Naive thymus-derived CD4-positive, alpha-beta T cell (primary cell): ENCODE measurements at regions of chr17 and their contacts with region 1.

Region 1: DNA sequence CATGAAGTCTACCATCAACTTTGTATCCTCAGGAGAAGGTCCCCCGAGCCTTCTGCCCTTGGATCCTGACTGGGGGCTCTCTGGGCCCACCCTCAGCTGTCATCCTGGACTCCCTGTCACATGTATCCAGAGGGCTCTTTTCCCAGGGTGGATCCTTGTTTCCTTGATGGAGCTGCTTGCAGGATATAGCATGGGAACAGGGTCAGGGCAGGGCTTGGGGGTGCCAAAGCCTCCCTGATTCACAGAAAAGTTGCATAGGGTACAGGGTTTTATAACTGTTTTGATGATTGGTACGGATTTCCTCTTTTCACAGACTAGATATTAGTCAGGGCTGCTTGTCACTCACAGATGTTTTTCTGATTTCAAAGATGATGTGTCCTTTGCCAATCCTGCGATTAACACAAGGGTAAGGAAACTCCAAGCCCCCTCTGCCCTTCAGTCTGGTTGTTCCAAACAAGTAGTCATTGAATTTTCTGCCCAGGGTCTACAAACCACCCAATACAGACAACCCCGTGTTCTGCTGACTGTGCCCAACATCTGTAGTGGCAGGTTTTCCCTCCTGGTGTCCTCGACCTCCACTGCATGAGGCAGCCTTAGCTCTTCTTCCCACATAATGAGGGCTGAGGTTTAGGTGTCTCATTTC is 20.6 kb upstream of the SLC35G3 start:
- DNase-seq: peak in 6 of 9 donors; percentile 44 to 64 (median 54)
- ATAC-seq: peak; percentile 36
- H3K4me3 ChIP-seq: peak overlapping the region; percentile 47
- H3K4me3 Mint-ChIP-seq: peak overlapping the region; percentile 69 to 91 (median 84)
- H3K27ac ChIP-seq: peak overlapping the region; percentile 76
- H3K27ac Mint-ChIP-seq: peak overlapping the region; percentile 90 to 99 (median 98)
- H3K4me1 ChIP-seq: peaks cover 75 to 85% of the 10 kb centered on the region in 2 donors
- H3K4me1 Mint-ChIP-seq: peaks cover 69 to 92% (median 87%) of the 10 kb centered on the region in 7 donors
- H3K27me3 ChIP-seq: no peaks in the 10 kb centered on the region
- H3K27me3 Mint-ChIP-seq: no peaks in the 10 kb centered on the region

Region 2: GRCh38 chr17:34665150-34665806 is 549.5 kb before region 1 on chr17:
- CTCF ChIA-PET with region 1: no interaction called
- POLR2A ChIA-PET with region 1: no interaction called
- intact Hi-C with region 1: no loop called
- DNase-seq: peak in 4 of 9 donors; percentile 4 to 19 (median 12)
- ATAC-seq: peak; percentile 32
- H3K4me3 ChIP-seq: no peak overlapping the region
- H3K4me3 Mint-ChIP-seq: peak overlapping the region in 8 of 10 donors; percentile 6 to 68 (median 44)
- H3K27ac ChIP-seq: no peak overlapping the region
- H3K27ac Mint-ChIP-seq: peak overlapping the region in 5 of 9 donors; percentile 10 to 61 (median 47)
- H3K4me1 ChIP-seq: peaks cover 0 to 13% of the 10 kb centered on the region in 2 donors
- H3K4me1 Mint-ChIP-seq: peaks cover 3 to 19% (median 13%) of the 10 kb centered on the region in 7 donors
- H3K27me3 ChIP-seq: no peaks in the 10 kb centered on the region
- H3K27me3 Mint-ChIP-seq: peaks cover 0 to 20% (median 7%) of the 10 kb centered on the region in 5 donors

Region 3: DNA sequence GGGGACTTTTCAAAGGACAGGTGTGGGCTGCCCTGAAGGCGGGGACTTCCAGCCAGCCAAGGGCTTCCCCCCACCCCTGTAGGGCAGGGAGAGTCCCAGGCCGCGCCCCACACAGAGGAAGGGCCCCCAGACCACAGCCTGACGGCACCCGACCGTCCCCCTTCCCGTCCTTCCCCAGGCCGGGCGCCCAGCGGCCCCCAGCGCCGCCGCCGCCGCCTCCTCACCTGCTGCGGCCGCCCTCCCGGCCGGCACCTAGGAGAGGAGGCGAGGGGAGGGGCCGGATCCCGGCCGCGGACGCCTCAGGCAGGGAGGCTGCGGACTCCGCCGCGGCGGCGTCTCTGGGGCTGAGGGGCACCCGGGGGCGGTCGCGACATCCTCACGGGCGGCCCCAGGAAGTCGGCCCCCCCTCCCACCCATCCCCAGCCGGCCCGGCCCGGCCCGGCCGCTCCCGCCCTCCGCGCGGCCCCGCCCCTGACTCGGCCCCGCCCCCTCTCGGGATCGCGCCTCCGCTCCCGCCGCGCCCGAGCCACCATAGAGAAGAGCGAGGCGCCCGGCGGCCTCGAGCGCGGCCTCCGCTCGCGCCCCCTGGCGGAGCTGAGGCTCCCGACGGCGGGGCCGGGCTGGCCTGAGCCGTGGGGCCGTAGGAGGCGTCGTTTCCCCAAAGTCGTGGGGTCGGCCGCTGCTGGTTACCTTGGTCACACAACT is 125.7 kb before region 1 on chr17:
- CTCF ChIA-PET with region 1: no interaction called
- POLR2A ChIA-PET with region 1: no interaction called
- intact Hi-C with region 1: no loop called
- DNase-seq: peak; percentile 77 to 95 (median 89)
- ATAC-seq: peak; percentile 94
- H3K4me3 ChIP-seq: peak overlapping the region; percentile 93
- H3K4me3 Mint-ChIP-seq: peak overlapping the region; percentile 93 to 98 (median 94)
- H3K27ac ChIP-seq: peak overlapping the region; percentile 89
- H3K27ac Mint-ChIP-seq: peak overlapping the region; percentile 89 to 97 (median 94)
- H3K4me1 ChIP-seq: peaks cover 13 to 27% of the 10 kb centered on the region in 2 donors
- H3K4me1 Mint-ChIP-seq: peaks cover 21 to 52% (median 44%) of the 10 kb centered on the region in 7 donors
- H3K27me3 ChIP-seq: no peaks in the 10 kb centered on the region
- H3K27me3 Mint-ChIP-seq: no peaks in the 10 kb centered on the region

Region 4: DNA sequence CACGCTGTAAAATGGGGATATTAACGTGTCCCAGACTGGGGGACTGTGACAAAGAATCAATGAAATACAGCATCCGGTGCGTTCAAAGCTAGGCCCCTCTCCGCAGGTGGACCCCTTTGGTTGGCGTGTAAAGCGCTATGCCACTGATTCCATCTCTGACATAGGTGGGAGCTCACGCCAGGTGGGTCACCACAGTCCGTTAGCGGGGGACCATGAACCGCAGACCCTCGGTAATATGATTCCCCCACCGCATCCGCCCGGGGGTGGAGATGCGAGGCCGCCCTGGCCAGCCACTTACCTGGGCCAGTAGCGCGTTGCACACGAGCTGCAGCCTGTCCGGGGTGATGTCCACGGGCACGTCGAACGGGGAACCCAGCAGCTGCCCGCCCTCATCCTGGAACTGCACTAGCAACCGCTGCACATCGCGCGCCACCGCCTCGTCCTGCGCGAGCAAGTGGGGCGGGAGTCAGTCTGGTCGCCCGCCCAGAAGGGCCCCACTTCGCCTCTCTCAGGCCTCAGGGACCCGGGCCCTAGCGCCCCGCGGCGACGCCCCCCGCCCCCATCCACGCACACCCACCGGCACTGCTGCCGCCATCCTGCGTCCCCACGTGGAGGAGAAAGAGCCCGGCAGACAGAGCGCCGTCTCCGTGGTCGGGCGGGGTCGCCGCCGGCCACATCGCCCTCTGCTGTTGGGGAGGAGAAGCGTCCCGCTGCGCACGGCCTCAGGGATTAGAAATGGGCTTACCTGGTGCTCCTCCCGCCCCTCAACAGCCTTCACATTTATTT is 72.9 kb before region 1 on chr17 and contains the start of gene NLE1:
- CTCF ChIA-PET with region 1: interaction called, 6 read pairs
- POLR2A ChIA-PET with region 1: interaction called, 15 read pairs
- intact Hi-C with region 1: loop called in 1 of 2 experiments (anchors 1 kb)
- DNase-seq: peak; percentile 79 to 94 (median 89)
- ATAC-seq: peak; percentile 100
- H3K4me3 ChIP-seq: peak within 1 kb of the TSS; percentile 79
- H3K4me3 Mint-ChIP-seq: peak within 1 kb of the TSS; percentile 77 to 88 (median 86)
- H3K27ac ChIP-seq: peak within 1 kb of the TSS; percentile 81
- H3K27ac Mint-ChIP-seq: peak within 1 kb of the TSS; percentile 66 to 90 (median 87)
- H3K4me1 ChIP-seq: peaks cover 6 to 13% of the 10 kb centered on the region in 2 donors
- H3K4me1 Mint-ChIP-seq: peaks cover 7 to 30% (median 21%) of the 10 kb centered on the region in 7 donors
- H3K27me3 ChIP-seq: no peaks in the 10 kb centered on the region
- H3K27me3 Mint-ChIP-seq: no peaks in the 10 kb centered on the region
- total RNA-seq, gene NLE1: 10.0 to 29.4 (median 21.8) TPM

Region 5: DNA sequence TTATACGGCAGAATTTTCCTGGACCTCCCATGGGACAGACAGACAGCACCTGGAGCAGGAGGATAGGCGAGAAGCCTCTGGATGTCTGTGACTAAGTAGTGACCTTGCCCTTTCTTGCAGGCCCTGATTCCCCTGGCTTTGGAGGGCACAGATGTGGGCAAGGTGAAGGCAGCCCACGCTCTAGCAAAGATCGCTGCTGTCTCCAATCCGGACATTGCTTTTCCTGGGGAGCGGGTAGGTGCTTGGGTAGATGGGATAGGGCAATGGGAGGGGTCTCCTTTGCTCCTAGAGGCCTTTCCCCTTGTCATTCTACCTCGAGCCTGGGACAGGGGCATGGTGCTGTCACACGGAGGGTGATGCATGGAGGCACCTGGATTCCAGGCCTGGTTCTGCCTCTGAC is 37.9 kb before region 1 on chr17:
- CTCF ChIA-PET with region 1: interaction called, 6 read pairs
- POLR2A ChIA-PET with region 1: interaction called, 21 read pairs
- intact Hi-C with region 1: loop called (anchors 1 kb)
- DNase-seq: no peak
- ATAC-seq: no peak
- H3K4me3 ChIP-seq: no peak overlapping the region
- H3K4me3 Mint-ChIP-seq: peak overlapping the region in 8 of 10 donors; percentile 47 to 85 (median 72)
- H3K27ac ChIP-seq: peak overlapping the region; percentile 42
- H3K27ac Mint-ChIP-seq: peak overlapping the region; percentile 85 to 99 (median 91)
- H3K4me1 ChIP-seq: peaks cover 28 to 40% of the 10 kb centered on the region in 2 donors
- H3K4me1 Mint-ChIP-seq: peaks cover 51 to 92% (median 75%) of the 10 kb centered on the region in 7 donors
- H3K27me3 ChIP-seq: no peaks in the 10 kb centered on the region
- H3K27me3 Mint-ChIP-seq: no peaks in the 10 kb centered on the region

Region 6: DNA sequence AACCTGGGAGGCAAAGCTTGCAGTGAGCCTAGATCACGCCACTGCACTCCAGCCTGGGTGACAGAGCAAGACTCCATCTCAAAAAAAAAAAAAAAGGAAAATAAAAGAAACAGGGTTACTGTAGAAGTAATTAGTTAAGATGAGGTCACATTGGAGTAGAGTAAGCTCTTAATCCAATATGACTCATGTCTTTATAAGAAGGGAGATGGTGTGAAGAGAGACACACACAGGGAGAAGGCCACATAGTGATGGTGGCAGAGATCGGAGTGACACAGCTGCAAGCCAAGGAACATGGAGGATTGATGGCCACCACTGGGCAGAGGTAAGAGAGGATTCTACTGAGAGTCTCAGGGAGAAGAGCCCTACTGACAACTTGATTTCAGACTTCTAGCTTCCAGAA is 12.8 kb after region 1 on chr17:
- CTCF ChIA-PET with region 1: interaction called, 6 read pairs
- POLR2A ChIA-PET with region 1: interaction called, 50 read pairs
- intact Hi-C with region 1: loop called in 1 of 2 experiments (anchors 1 kb)
- DNase-seq: no peak
- ATAC-seq: no peak
- H3K4me3 ChIP-seq: no peak overlapping the region
- H3K4me3 Mint-ChIP-seq: no peak overlapping the region
- H3K27ac ChIP-seq: no peak overlapping the region
- H3K27ac Mint-ChIP-seq: peak overlapping the region in 4 of 9 donors; percentile 38 to 67 (median 53)
- H3K4me1 ChIP-seq: peaks cover 0 to 17% of the 10 kb centered on the region in 2 donors
- H3K4me1 Mint-ChIP-seq: peaks cover 12 to 82% (median 70%) of the 10 kb centered on the region in 7 donors
- H3K27me3 ChIP-seq: no peaks in the 10 kb centered on the region
- H3K27me3 Mint-ChIP-seq: no peaks in the 10 kb centered on the region

Region 7: GRCh38 chr17:35312790-35313711 is 98.3 kb after region 1 on chr17:
- CTCF ChIA-PET with region 1: interaction called, 6 read pairs
- POLR2A ChIA-PET with region 1: interaction called, 24 read pairs
- intact Hi-C with region 1: loop called in 1 of 2 experiments (anchors 1 kb)
- DNase-seq: peak; percentile 56 to 96 (median 90)
- ATAC-seq: peak; percentile 93
- H3K4me3 ChIP-seq: peak overlapping the region; percentile 70
- H3K4me3 Mint-ChIP-seq: peak overlapping the region; percentile 88 to 98 (median 96)
- H3K27ac ChIP-seq: peak overlapping the region; percentile 73
- H3K27ac Mint-ChIP-seq: peak overlapping the region; percentile 94 to 99 (median 98)
- H3K4me1 ChIP-seq: peaks cover 12 to 13% of the 10 kb centered on the region in 2 donors
- H3K4me1 Mint-ChIP-seq: peaks cover 37 to 79% (median 69%) of the 10 kb centered on the region in 7 donors
- H3K27me3 ChIP-seq: no peaks in the 10 kb centered on the region
- H3K27me3 Mint-ChIP-seq: peaks cover 0 to 5% (median 0%) of the 10 kb centered on the region in 5 donors

Region 8: DNA sequence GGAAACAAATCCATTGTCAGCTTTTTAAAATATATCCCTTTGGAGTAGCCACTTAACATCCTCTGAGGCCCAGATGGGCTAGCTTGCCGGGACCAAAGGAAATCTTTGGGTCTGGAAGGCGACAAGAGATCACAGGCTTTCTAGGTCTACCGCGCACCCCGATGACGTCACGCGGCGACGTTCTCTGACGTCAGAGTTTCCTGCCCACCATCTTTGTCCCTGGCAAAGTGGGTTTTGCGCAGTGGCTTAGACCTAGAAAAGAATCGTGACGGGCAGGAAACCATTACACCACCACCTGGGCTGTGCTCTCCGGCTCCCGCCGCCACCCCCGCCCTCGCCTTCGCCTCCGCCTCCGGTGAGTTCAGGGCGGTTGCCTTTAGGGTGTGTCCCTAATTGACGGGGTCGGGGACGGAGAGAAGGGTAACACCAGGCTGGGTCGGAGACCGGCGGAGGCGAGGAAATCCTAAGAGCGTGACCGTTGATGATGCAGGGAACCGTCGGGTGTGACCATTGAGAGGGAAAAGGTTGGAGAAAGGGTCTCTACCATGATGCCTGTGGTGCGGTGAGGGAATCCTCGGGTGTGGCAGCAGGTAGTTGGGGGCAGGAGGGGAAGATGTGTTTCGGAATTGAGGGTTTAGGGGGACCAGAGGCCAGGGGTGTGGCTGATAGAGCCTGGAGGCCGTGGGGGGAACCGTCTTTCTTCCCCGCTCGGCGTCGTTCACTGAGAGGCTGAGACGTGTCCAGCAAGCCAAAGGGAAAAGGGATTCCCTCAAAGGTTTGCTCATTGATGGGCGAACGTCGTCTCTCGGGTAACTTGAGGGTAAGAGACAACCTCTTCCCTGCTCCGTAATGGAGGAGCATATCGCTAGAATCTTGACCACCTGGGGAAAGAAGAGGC is 372.6 kb after region 1 on chr17 and contains the start of gene AP2B1:
- CTCF ChIA-PET with region 1: no interaction called
- POLR2A ChIA-PET with region 1: interaction called, 5 read pairs
- intact Hi-C with region 1: loop called in 1 of 2 experiments (anchors 1 kb)
- DNase-seq: peak; percentile 96 to 100 (median 98)
- ATAC-seq: peak; percentile 99
- H3K4me3 ChIP-seq: peak within 1 kb of the TSS; percentile 85
- H3K4me3 Mint-ChIP-seq: peak within 1 kb of the TSS; percentile 92 to 99 (median 97)
- H3K27ac ChIP-seq: peak within 1 kb of the TSS; percentile 91
- H3K27ac Mint-ChIP-seq: peak within 1 kb of the TSS; percentile 95 to 99 (median 99)
- H3K4me1 ChIP-seq: peaks cover 13 to 17% of the 10 kb centered on the region in 2 donors
- H3K4me1 Mint-ChIP-seq: peaks cover 28 to 45% (median 38%) of the 10 kb centered on the region in 7 donors
- H3K27me3 ChIP-seq: no peaks in the 10 kb centered on the region
- H3K27me3 Mint-ChIP-seq: peaks cover 0 to 12% (median 0%) of the 10 kb centered on the region in 5 donors
- total RNA-seq, gene AP2B1: 84.7 to 197 (median 136) TPM

Region 9: GRCh38 chr17:35740997-35741931 is 526.5 kb after region 1 on chr17:
- CTCF ChIA-PET with region 1: no interaction called
- POLR2A ChIA-PET with region 1: no interaction called
- intact Hi-C with region 1: no loop called
- DNase-seq: peak in 2 of 9 donors; percentile 24 to 28
- ATAC-seq: peak; percentile 52
- H3K4me3 ChIP-seq: no peak overlapping the region
- H3K4me3 Mint-ChIP-seq: peak overlapping the region; percentile 31 to 82 (median 71)
- H3K27ac ChIP-seq: no peak overlapping the region
- H3K27ac Mint-ChIP-seq: no peak overlapping the region
- H3K4me1 ChIP-seq: no peaks in the 10 kb centered on the region
- H3K4me1 Mint-ChIP-seq: peaks cover 4 to 16% (median 10%) of the 10 kb centered on the region in 7 donors
- H3K27me3 ChIP-seq: peaks cover 0 to 7% of the 10 kb centered on the region in 2 donors
- H3K27me3 Mint-ChIP-seq: peaks cover 21 to 41% (median 23%) of the 10 kb centered on the region in 5 donors